ENCODE measurements at regions of chr1 and their contacts with region 1.

Region 1: DNA sequence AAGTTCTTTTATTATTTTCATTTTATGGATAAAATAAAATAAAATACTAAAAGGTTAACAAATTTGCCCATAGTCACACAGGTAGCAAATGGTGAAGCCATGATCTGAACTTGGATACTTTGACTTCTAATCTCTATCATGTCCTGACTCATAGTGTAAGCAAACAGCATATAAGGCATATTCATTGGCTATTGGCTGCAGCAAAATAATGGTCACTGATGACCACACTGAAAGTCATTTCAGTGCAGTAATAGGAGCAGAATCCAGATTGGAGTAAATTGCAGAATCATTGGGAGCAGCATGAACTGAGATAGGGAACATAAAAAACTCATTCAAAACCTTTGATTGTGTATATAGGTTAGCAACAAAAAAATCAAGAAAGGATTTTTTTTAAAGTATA is 262.9 kb downstream of the PLA2G4A start:
- DNase-seq: no peak
- H3K4me3 Mint-ChIP-seq: no peak overlapping the region
- H3K27ac Mint-ChIP-seq: no peak overlapping the region
- H3K4me1 Mint-ChIP-seq: peaks cover 14% of the 10 kb centered on the region
- H3K27me3 Mint-ChIP-seq: no peaks in the 10 kb centered on the region

Region 2: GRCh38 chr1:186974774-186975181 is 116.9 kb before region 1 on chr1:
- CTCF ChIA-PET with region 1: no interaction called
- POLR2A ChIA-PET with region 1: no interaction called
- DNase-seq: no peak
- H3K4me3 Mint-ChIP-seq: no peak overlapping the region
- H3K27ac Mint-ChIP-seq: no peak overlapping the region
- H3K4me1 Mint-ChIP-seq: no peaks in the 10 kb centered on the region
- H3K27me3 Mint-ChIP-seq: peaks cover 4% of the 10 kb centered on the region

Region 3: GRCh38 chr1:187067160-187067559 is 24.5 kb before region 1 on chr1:
- CTCF ChIA-PET with region 1: interaction called, 5 read pairs
- POLR2A ChIA-PET with region 1: interaction called, 11 read pairs
- DNase-seq: no peak
- H3K4me3 Mint-ChIP-seq: no peak overlapping the region
- H3K27ac Mint-ChIP-seq: no peak overlapping the region
- H3K4me1 Mint-ChIP-seq: no peaks in the 10 kb centered on the region
- H3K27me3 Mint-ChIP-seq: no peaks in the 10 kb centered on the region

Region 4: DNA sequence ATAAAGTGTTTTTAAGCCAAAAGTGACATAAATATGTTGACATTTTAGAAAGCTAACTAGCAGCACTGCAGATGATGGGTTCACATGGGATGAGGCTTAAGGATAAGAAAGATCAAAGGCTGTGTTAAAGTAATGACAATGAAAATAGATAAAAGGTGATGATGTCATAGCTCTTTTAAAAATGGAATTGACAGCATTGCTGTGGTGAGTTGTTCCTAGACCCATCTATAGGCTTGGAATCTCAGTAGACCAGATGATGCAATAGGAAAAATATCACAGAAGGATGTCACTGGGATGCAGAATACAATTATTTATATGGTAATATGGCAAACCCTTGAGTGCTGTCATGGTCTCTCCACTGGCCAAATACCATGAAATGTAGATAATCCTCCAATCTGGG is 23.1 kb after region 1 on chr1:
- CTCF ChIA-PET with region 1: no interaction called
- POLR2A ChIA-PET with region 1: no interaction called
- DNase-seq: no peak
- H3K4me3 Mint-ChIP-seq: no peak overlapping the region
- H3K27ac Mint-ChIP-seq: no peak overlapping the region
- H3K4me1 Mint-ChIP-seq: no peaks in the 10 kb centered on the region
- H3K27me3 Mint-ChIP-seq: no peaks in the 10 kb centered on the region

Measured in activated CD4-positive, alpha-beta memory T cell treated with anti-CD3 and anti-CD28 coated beads, Interleukin-2, amount 10 ng/mL, durations not matched to agents 7 days and 5 days (primary cell).